Right lobe of liver (tissue), 6 donors: ENCODE measurements at regions of chr12 and their contacts with region 1.

Region 1: DNA sequence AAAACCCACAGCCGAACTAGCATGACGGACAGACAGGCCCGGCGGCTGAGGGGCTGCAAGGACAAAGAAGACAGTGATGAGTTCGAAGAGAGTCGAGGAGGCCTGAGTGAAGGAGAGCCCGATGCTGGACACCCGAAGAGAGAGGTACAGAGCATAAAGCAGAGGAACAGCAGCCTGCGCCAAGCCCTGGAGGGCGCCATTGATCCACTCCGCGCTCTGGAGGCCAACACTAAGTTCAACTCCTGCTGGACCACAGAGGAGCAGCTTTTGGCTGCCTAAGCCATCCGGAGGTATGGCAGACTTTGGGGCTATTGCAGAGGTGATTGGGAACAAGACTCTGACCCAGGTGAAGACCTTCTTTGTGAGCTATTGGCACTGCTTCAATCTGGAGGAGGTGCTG is 7.8 kb upstream of the PLXNC1 start:
- DNase-seq: peak in 1 of 3 donors; percentile 54
- ATAC-seq: peak in 3 of 4 donors; percentile 52 to 56 (median 53)
- H3K4me3 ChIP-seq: no peak overlapping the region
- H3K27ac ChIP-seq: no peak overlapping the region
- H3K4me1 ChIP-seq: no peaks in the 10 kb centered on the region
- H3K27me3 ChIP-seq: no peaks in the 10 kb centered on the region
- CTCF ChIP-seq: peak in 3 of 4 donors; percentile 15 to 29 (median 15)
- POLR2A ChIP-seq: no peak

Region 2: GRCh38 chr12:93943766-93944165 is 196.8 kb before region 1 on chr12:
- intact Hi-C with region 1: no loop called
- DNase-seq: no peak
- ATAC-seq: peak in 1 of 4 donors; percentile 22
- H3K4me3 ChIP-seq: no peak overlapping the region
- H3K27ac ChIP-seq: no peak overlapping the region
- H3K4me1 ChIP-seq: no peaks in the 10 kb centered on the region
- H3K27me3 ChIP-seq: no peaks in the 10 kb centered on the region
- CTCF ChIP-seq: no peak
- POLR2A ChIP-seq: no peak

Region 3: GRCh38 chr12:94222351-94223084 is 82.0 kb after region 1 on chr12:
- intact Hi-C with region 1: no loop called
- DNase-seq: no peak
- ATAC-seq: no peak
- H3K4me3 ChIP-seq: no peak overlapping the region
- H3K27ac ChIP-seq: no peak overlapping the region
- H3K4me1 ChIP-seq: no peaks in the 10 kb centered on the region
- H3K27me3 ChIP-seq: no peaks in the 10 kb centered on the region
- CTCF ChIP-seq: no peak
- POLR2A ChIP-seq: no peak

Region 4: DNA sequence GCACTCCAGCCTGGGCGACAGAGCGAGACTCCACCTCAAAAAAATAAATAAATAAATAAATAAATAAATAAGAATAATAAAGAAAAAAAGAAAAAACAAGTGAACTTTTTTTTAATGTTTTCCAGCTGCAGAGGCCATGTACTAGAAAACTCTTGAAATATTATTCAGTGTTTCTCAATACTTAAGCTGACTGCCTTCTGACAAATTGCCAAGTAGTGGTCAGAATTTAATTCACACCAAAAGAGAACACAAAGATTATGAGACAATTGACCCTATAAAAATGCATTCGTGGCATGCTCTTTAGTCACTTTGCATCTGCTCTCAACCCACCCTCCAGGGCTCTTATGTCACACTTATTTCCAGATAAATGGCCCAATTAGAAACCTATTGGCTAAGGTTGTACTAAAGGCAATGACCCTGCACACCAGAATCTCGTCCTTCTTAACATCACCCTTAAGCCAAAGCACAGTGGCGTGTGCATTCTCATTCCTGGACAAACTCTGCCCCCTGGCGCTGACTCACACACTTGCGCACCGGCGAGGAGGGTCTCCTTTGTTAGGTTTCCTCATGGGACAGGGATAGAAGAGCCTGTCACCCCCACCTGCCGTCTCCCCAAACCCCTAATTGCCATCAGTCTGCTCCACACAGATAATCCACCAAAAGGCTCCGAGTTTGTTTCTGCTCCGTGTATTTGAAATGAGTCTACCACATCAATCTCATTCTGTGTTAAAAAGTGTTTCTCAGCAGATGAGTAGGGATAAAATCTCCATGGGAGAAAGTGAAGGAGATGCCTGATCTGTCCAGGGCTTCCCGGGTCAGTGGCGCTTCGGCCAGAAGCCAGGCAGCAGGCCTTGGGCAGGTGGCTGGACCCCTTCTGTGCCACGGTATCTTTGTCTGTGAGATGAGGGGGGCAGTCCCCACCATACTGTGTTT is 392.2 kb after region 1 on chr12:
- intact Hi-C with region 1: loop called (anchors 5 kb)
- DNase-seq: peak; percentile 66 to 72 (median 70)
- ATAC-seq: peak; percentile 65 to 82 (median 75)
- H3K4me3 ChIP-seq: no peak overlapping the region
- H3K27ac ChIP-seq: no peak overlapping the region
- H3K4me1 ChIP-seq: peaks cover 0 to 26% (median 12%) of the 10 kb centered on the region in 4 donors
- H3K27me3 ChIP-seq: no peaks in the 10 kb centered on the region
- CTCF ChIP-seq: peak; percentile 77 to 83 (median 81)
- POLR2A ChIP-seq: no peak